HAP-1 (cell line): ENCODE measurements at regions of chr1 and their contacts with region 1.

Region 1: DNA sequence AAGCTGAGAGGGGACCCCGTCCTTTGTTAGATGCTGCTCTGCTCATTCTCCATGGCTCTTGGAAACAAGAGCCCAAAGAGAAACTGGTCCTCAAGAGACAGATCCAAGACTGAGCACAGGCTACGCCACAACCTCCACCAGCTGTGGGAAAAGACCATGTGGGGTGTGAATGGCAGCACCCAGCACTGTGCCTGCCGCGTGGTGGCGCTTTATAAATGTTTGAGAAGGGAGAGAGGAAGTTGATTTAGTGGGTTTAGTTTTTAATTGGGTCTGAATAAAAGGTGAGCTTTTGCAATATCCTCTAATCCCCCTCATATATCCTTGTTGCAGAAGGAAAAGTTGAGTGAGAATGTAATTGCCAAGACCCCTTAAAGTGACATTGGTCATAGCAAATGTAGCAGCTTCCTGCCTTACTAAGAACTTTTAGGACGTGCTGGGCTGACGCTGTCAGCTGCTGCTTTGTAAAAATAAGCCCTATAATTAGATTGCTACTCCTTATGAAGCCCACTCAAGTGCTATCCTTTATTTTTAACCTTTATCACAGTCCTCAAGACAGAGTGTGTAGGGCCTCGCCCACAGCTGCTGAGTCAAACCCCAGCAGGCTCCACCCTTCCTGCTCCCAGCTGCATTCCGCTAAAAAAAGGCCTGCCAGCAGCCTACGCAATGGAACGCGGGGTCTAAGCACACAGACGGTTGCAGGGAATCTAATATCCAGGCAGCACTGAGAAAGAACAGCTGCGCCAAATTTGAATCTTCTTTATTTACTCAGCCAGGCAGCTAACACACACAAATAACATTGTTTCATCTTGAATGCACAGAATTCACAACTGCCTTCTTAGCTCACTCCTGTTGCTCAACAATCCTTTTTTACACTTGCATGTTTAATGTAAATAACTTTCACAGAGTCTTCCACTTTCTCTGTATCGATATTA is 47.4 kb upstream of the PRDX6 start:
- DNase-seq: peak; percentile 67 to 81
- H3K4me3 ChIP-seq: no peak overlapping the region
- H3K4me1 ChIP-seq: peaks cover 29% of the 10 kb centered on the region
- H3K27me3 ChIP-seq: no peaks in the 10 kb centered on the region

Region 2: GRCh38 chr1:173554541-173555250 is 125.0 kb after region 1 on chr1:
- in situ Hi-C with region 1: no loop called
- DNase-seq: no peak
- H3K4me3 ChIP-seq: no peak overlapping the region
- H3K4me1 ChIP-seq: no peaks in the 10 kb centered on the region
- H3K27me3 ChIP-seq: no peaks in the 10 kb centered on the region

Region 3: DNA sequence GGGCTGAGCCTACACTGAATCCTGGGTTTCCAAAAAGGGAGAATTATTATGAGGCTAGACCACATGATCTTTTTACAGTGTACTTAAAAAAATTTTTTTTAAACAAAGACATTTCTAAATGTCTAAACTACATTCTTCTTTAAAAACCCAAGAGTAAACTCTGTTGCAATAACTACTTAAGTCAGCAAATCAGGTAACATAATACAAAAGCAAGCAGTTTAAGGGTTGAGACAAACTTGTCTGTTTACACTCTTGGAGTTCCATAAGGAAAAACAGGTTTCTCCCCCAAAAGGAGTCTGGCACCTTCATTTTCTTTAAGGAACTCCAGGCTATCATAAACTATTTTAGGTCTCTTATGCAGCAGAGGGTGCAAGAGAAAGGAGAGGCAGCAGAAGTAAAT is 252.4 kb after region 1 on chr1:
- in situ Hi-C with region 1: loop called (anchors 25 kb)
- DNase-seq: peak in 1 of 2 experiments; percentile 5
- H3K4me3 ChIP-seq: no peak overlapping the region
- H3K4me1 ChIP-seq: peaks cover 24% of the 10 kb centered on the region
- H3K27me3 ChIP-seq: no peaks in the 10 kb centered on the region

Region 4: GRCh38 chr1:173824331-173825081 is 394.8 kb after region 1 on chr1 and contains the starts of genes CENPL and DARS2:
- in situ Hi-C with region 1: loop called (anchors 10 kb)
- DNase-seq: peak; percentile 95 to 98
- H3K4me3 ChIP-seq: peak within 1 kb of the TSS; percentile 68
- H3K4me1 ChIP-seq: peaks cover 21% of the 10 kb centered on the region
- H3K27me3 ChIP-seq: no peaks in the 10 kb centered on the region